Psoas muscle (tissue), 8 donors: ENCODE measurements at regions of chr18 and their contacts with region 1.

Region 1: DNA sequence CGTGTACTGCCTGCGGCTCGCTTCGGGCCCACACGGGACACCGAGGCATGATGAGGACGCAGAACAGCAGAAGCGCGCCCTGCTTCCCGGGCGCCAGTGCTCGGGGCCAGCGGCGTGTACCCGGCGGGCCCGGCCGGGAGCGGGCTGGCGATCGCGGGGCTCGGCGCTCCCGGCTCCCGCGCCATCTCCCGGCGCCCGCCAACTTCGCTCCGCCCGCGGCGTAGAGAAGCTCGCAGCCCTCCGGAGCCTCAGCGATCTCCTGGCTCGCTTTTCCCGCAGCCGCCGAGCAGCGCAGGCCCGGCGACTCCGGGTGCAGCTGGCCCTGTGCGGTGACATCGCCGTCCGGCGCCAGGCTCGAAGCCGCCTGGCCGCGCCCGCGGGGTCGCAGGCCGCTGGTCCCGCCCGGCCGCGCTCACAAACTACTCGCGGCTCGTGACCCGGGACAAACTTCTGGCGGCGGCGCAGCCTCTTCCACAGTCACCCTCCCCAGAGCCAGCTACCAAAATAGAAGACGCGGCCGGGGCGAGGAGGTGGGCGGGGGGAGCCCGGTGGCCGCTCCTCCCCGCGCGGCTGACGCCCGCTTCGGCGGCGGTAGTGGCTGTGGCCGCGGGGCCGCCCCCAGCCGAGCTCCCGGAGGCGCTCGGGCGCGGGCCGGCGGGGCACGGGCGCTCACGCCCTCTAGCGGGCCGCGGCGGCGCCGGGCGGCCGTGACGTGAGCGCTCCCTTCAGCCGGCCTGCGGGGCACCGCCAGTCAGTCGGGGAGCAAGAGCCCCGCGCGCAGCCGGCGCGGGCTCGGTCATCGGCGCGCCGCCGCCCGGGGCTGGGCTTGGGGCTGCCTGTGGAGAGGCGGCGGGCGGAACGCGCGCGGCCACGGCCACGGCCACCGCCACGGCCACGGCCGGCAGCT is at the start of gene PTPRM:
- DNase-seq: peak; percentile 94 to 97
- ATAC-seq: peak; percentile 90 to 93 (median 90)
- H3K4me3 ChIP-seq: peak within 1 kb of the TSS; percentile 93
- H3K27ac ChIP-seq: peak within 1 kb of the TSS; percentile 98
- H3K4me1 ChIP-seq: peaks cover 34% of the 10 kb centered on the region
- H3K27me3 ChIP-seq: no peaks in the 10 kb centered on the region
- CTCF ChIP-seq: peak; percentile 75
- total RNA-seq, gene PTPRM: 33.7 to 78.9 (median 40.4) TPM

Region 2: GRCh38 chr18:7221424-7222155 is 345.2 kb before region 1 on chr18:
- intact Hi-C with region 1: loop called (anchors 5 kb)
- DNase-seq: peak in 1 of 2 donors; percentile 55
- ATAC-seq: peak; percentile 86 to 99 (median 96)
- H3K4me3 ChIP-seq: no peak overlapping the region
- H3K27ac ChIP-seq: no peak overlapping the region
- H3K4me1 ChIP-seq: peaks cover 9% of the 10 kb centered on the region
- H3K27me3 ChIP-seq: no peaks in the 10 kb centered on the region
- CTCF ChIP-seq: peak; percentile 81

Region 3: DNA sequence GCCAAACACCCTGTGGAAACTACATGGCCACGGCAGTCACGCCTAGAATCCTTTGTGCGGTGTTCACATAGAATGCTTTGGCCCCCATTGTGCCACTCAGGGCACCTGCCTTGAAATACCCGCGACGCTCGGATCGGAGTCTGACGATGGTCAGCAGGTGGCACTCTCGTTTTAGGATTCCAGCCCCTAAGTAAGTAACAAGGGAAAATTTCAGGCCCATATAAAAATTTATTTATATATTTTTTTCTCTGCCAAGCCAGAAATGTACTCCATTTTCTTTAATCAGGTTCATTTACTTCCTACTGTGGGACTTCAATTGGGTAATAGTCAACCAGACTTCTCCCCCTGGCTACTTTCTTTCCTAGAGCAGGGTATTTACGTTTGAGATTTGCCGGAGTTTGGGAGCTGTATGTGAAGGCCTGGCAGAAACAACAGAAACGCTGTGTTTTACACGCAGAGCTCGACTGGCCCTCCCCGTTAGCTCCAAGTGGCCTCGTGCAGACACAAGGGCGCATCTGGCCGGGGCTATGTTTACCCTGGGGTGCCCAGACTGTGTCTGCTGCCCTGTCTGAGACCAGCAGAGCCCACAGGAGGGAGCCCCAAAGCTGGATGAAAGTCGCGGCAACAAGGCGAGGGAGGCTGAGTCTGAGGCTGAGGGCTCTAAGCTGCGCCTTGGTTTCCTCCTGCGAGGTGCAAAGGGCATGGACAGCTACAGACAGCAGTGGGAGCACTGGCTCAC is 294.3 kb before region 1 on chr18:
- intact Hi-C with region 1: loop called (anchors 2 to 5 kb)
- DNase-seq: peak; percentile 57 to 69
- ATAC-seq: peak; percentile 77 to 95 (median 84)
- H3K4me3 ChIP-seq: peak overlapping the region; percentile 26
- H3K27ac ChIP-seq: peak overlapping the region; percentile 56
- H3K4me1 ChIP-seq: peaks cover 9% of the 10 kb centered on the region
- H3K27me3 ChIP-seq: no peaks in the 10 kb centered on the region
- CTCF ChIP-seq: peak; percentile 55

Region 4: GRCh38 chr18:7370802-7371201 is 196.0 kb before region 1 on chr18:
- intact Hi-C with region 1: loop called in 1 of 2 experiments (anchors 10 kb)
- DNase-seq: peak; percentile 59 to 77
- ATAC-seq: peak; percentile 47 to 78 (median 72)
- H3K4me3 ChIP-seq: no peak overlapping the region
- H3K27ac ChIP-seq: no peak overlapping the region
- H3K4me1 ChIP-seq: no peaks in the 10 kb centered on the region
- H3K27me3 ChIP-seq: no peaks in the 10 kb centered on the region
- CTCF ChIP-seq: no peak

Region 5: GRCh38 chr18:7429831-7430230 is 137.0 kb before region 1 on chr18:
- intact Hi-C with region 1: no loop called
- DNase-seq: no peak
- ATAC-seq: no peak
- H3K4me3 ChIP-seq: no peak overlapping the region
- H3K27ac ChIP-seq: no peak overlapping the region
- H3K4me1 ChIP-seq: no peaks in the 10 kb centered on the region
- H3K27me3 ChIP-seq: no peaks in the 10 kb centered on the region
- CTCF ChIP-seq: no peak

Region 6: DNA sequence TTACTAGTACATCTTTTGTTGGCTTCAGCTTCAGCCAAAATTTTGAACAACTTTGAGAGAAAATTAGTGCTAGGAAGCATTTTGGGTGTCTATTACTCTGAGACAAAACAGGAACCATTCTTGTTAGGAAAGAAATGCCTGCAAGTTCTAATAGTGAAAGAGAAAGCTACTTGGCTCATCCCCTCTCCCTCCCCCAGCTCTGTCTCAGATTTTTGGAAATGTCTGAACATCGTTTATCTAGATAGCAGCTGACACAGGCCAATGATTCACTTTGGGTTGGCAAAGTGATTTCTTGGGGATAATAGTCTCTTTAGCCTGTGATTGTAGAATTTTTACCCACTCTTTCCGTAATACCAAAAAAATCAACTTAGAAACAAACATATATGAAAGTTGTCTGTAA is 42.0 kb before region 1 on chr18:
- intact Hi-C with region 1: no loop called
- DNase-seq: no peak
- ATAC-seq: no peak
- H3K4me3 ChIP-seq: no peak overlapping the region
- H3K27ac ChIP-seq: no peak overlapping the region
- H3K4me1 ChIP-seq: no peaks in the 10 kb centered on the region
- H3K27me3 ChIP-seq: no peaks in the 10 kb centered on the region
- CTCF ChIP-seq: no peak

Region 7: DNA sequence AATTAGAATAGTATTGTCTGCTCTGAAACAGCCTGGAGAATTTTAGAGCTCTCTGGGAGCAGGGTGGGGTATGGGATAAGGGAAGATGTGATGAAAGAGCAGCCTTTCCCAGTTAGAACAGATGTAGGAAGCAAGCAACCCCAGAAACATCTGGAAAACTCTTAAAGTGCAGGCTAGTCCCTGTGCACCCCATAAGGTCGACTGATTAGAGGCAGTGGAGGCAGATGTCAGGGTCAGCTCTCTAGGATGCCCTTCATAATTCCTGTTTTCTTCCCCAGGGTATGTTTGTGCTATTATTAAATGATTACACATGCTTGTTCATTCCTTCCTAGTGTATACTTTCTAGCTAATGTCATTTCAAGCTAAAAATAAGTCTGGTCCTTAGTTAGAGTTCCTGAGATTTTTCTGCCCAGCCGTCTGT is 42.0 kb after region 1 on chr18:
- intact Hi-C with region 1: loop called (anchors 5 kb)
- DNase-seq: no peak
- ATAC-seq: peak; percentile 66 to 85 (median 71)
- H3K4me3 ChIP-seq: peak overlapping the region; percentile 47
- H3K27ac ChIP-seq: peak overlapping the region; percentile 89
- H3K4me1 ChIP-seq: peaks cover 73% of the 10 kb centered on the region
- H3K27me3 ChIP-seq: no peaks in the 10 kb centered on the region
- CTCF ChIP-seq: no peak

Region 8: GRCh38 chr18:7755753-7756475 is 189.1 kb after region 1 on chr18:
- intact Hi-C with region 1: loop called in 1 of 2 experiments (anchors 5 kb)
- DNase-seq: no peak
- ATAC-seq: peak; percentile 31 to 60 (median 46)
- H3K4me3 ChIP-seq: no peak overlapping the region
- H3K27ac ChIP-seq: no peak overlapping the region
- H3K4me1 ChIP-seq: peaks cover 51% of the 10 kb centered on the region
- H3K27me3 ChIP-seq: no peaks in the 10 kb centered on the region
- CTCF ChIP-seq: peak; percentile 37

Region 9: GRCh38 chr18:7950380-7951143 is 383.7 kb after region 1 on chr18:
- intact Hi-C with region 1: loop called in 1 of 2 experiments (anchors 10 kb)
- DNase-seq: no peak
- ATAC-seq: peak in 3 of 4 donors; percentile 40 to 55 (median 47)
- H3K4me3 ChIP-seq: no peak overlapping the region
- H3K27ac ChIP-seq: no peak overlapping the region
- H3K4me1 ChIP-seq: no peaks in the 10 kb centered on the region
- H3K27me3 ChIP-seq: no peaks in the 10 kb centered on the region
- CTCF ChIP-seq: no peak